RWPE1 (cell line): ENCODE measurements at regions of chr12 and their contacts with region 1.

Region 1: GRCh38 chr12:53014709-53015108 is 8.5 kb downstream of the EIF4B start:
- DNase-seq: no peak
- H3K27ac ChIP-seq: no peak overlapping the region
- CTCF ChIP-seq: no peak

Region 2: DNA sequence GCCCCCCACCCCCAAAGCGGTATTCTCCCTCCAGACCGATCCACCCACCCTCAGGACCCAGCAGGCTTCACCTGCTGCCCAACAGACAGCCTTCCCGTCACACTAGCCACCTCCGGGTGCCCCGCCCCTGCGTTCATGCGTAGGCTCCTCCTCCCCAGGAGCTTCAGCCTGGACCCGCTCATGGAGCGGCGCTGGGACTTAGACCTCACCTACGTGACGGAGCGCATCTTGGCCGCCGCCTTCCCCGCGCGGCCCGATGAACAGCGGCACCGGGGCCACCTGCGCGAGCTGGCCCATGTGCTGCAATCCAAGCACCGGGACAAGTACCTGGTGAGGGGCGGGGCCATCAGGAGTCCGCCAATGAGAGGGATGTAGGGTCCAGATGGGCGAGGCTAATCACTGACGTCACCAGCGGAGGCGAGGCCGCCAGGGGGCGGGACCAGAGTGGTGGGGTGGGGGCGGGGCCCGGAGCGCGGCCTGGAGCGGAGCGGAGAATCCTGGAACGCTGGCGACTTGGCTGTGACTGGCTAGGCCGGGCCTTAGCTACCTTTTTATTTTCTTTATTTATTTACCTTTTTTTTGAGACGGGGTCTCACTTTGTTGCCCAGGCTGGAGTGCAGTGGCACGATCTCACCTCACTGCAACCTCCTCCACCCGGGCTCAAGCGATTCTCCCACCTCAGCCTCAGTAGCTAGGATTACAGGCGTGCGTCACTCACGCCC is 39.6 kb after region 1 on chr12:
- CTCF ChIA-PET with region 1: interaction called, 11 read pairs
- POLR2A ChIA-PET with region 1: no interaction called
- DNase-seq: peak; percentile 94
- H3K27ac ChIP-seq: peak overlapping the region; percentile 99
- CTCF ChIP-seq: no peak